ENCODE measurements at regions of chr11 and their contacts with region 1.

Region 1: GRCh38 chr11:129639300-129639699 is 176.3 kb upstream of the TMEM45B start:
- DNase-seq: peak; percentile 73
- H3K4me3 Mint-ChIP-seq: peak overlapping the region; percentile 42
- H3K27ac Mint-ChIP-seq: peak overlapping the region; percentile 87
- H3K4me1 Mint-ChIP-seq: peaks cover 70% of the 10 kb centered on the region
- H3K27me3 Mint-ChIP-seq: no peaks in the 10 kb centered on the region

Region 2: GRCh38 chr11:128052912-128053641 is 1586.2 kb before region 1 on chr11:
- intact Hi-C with region 1: loop called (anchors 10 kb)
- DNase-seq: peak; percentile 67
- H3K4me3 Mint-ChIP-seq: peak overlapping the region; percentile 63
- H3K27ac Mint-ChIP-seq: peak overlapping the region; percentile 81
- H3K4me1 Mint-ChIP-seq: peaks cover 48% of the 10 kb centered on the region
- H3K27me3 Mint-ChIP-seq: no peaks in the 10 kb centered on the region

Region 3: DNA sequence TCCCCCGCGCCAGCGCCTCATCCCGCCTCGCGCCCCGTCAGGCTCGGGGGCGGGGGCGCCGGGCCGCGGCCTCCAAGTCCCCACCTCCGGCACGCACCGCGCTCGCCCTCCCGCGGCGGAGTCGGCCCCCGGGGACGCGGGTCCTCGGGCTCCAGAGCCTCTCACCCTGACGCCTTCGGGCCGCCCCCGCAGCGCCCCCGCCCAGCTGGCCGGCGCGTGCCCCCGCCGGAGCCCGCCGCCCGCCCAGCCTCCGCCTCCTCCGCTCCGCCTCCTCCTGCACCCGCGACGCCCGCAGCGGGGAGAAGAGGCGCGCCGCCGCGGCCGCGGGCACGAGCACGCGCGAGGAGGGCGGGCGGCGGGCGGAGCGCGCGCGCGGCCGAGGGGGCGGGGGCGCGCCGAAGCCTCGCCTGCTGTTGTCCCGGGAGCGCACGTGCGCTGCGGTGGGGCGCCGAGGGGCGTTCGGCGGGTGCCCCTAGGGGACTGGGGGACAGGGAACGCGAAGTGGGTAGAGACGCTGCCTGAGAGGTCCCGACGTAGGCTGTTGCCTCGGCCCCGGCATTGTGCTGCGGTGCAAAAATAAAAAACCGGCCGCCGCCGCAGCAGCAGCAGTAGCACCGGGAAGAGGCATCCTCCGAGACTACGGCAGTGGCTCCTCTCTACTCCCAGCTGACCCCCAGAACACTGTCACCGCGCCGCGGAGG is 359.8 kb before region 1 on chr11:
- intact Hi-C with region 1: loop called (anchors 10 kb)
- DNase-seq: peak; percentile 95
- H3K4me3 Mint-ChIP-seq: peak overlapping the region; percentile 77
- H3K27ac Mint-ChIP-seq: peak overlapping the region; percentile 86
- H3K4me1 Mint-ChIP-seq: peaks cover 36% of the 10 kb centered on the region
- H3K27me3 Mint-ChIP-seq: peaks cover 33% of the 10 kb centered on the region

Region 4: DNA sequence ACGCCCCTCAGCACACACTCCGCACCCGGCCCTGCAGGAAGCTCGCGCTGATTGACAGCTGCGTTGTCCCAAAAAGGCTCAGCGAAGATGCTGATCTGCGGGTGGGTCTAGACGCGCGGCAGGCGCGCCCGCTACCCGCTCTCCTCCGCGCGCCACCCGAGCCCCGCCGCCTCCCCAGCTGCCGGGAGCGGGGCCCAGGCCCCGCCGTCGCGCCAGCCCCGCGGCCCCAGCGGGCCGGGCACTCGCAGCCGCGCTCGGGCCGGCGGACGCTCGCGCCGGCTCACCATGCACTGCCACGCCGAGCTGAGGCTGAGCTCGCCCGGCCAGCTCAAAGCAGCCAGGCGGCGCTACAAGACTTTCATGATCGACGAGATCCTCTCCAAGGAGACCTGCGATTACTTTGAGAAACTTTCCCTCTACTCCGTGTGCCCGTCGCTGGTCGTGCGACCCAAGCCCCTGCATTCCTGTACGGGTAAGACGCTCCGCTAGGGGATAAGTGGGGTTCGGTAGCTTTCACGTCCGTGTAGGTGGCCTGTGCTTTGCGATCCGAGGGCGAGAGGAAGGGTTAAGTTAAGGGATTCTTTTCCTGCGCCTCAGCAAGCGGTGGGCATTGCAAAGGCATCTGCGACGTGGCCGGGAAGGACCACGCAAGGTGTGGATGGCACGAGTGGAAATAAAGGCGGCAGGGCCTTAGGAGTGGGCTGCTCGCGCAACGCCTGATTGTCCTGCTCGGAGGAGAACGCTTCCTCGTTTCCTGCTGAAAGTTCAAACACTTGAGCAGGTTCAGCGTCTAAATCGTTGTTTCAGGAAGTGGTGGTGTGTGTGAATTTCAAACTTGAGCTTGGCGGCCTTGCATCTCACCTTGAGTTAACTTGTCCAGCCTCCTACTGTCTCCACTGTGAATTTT is 263.3 kb before region 1 on chr11 and contains the start of gene BARX2:
- intact Hi-C with region 1: loop called (anchors 5 kb)
- DNase-seq: peak; percentile 80
- H3K4me3 Mint-ChIP-seq: peak within 1 kb of the TSS; percentile 86
- H3K27ac Mint-ChIP-seq: peak within 1 kb of the TSS; percentile 52
- H3K4me1 Mint-ChIP-seq: peaks cover 26% of the 10 kb centered on the region
- H3K27me3 Mint-ChIP-seq: peaks cover 72% of the 10 kb centered on the region
- total RNA-seq, gene BARX2: 4.1 and 4.7 TPM in 2 replicates

Region 5: GRCh38 chr11:129418039-129418438 is 221.3 kb before region 1 on chr11:
- intact Hi-C with region 1: loop called (anchors 1 kb)
- DNase-seq: peak; percentile 57
- H3K4me3 Mint-ChIP-seq: no peak overlapping the region
- H3K27ac Mint-ChIP-seq: peak overlapping the region; percentile 35
- H3K4me1 Mint-ChIP-seq: peaks cover 23% of the 10 kb centered on the region
- H3K27me3 Mint-ChIP-seq: no peaks in the 10 kb centered on the region

Region 6: DNA sequence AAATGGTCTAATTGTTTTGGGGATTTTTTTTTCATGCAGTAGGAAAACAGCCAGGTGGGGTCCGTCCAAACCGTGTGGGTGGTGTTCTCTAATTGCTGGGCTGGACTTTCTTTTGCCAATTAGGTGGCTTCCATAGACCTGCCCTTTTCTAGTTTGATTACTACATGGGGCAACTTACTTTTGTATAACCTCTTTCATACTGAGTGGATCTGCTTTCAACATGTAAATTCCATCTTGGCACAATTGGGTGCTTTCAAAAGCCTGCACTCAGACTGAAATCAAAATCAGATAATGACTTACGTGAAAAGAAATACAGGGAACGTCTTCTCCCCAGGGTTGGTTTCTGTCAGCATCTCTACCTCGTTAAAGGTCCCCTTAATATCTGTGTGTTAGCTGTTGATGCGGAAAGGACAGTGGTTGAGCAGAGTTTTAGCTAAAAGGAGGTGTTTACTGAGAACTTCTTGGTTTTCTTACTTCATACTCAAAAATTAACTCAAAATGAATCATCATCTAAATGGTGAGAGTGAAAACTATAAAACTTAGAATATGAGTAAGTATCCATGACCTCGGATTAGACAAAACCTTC is 191.6 kb before region 1 on chr11:
- intact Hi-C with region 1: loop called (anchors 1 kb)
- DNase-seq: no peak
- H3K4me3 Mint-ChIP-seq: no peak overlapping the region
- H3K27ac Mint-ChIP-seq: peak overlapping the region; percentile 87
- H3K4me1 Mint-ChIP-seq: peaks cover 13% of the 10 kb centered on the region
- H3K27me3 Mint-ChIP-seq: peaks cover 2% of the 10 kb centered on the region

Region 7: GRCh38 chr11:129530154-129530895 is 109.0 kb before region 1 on chr11:
- intact Hi-C with region 1: no loop called
- DNase-seq: no peak
- H3K4me3 Mint-ChIP-seq: no peak overlapping the region
- H3K27ac Mint-ChIP-seq: no peak overlapping the region
- H3K4me1 Mint-ChIP-seq: no peaks in the 10 kb centered on the region
- H3K27me3 Mint-ChIP-seq: no peaks in the 10 kb centered on the region

Region 8: GRCh38 chr11:129593098-129593497 is 46.2 kb before region 1 on chr11:
- intact Hi-C with region 1: no loop called
- DNase-seq: no peak
- H3K4me3 Mint-ChIP-seq: no peak overlapping the region
- H3K27ac Mint-ChIP-seq: no peak overlapping the region
- H3K4me1 Mint-ChIP-seq: no peaks in the 10 kb centered on the region
- H3K27me3 Mint-ChIP-seq: no peaks in the 10 kb centered on the region

Region 9: DNA sequence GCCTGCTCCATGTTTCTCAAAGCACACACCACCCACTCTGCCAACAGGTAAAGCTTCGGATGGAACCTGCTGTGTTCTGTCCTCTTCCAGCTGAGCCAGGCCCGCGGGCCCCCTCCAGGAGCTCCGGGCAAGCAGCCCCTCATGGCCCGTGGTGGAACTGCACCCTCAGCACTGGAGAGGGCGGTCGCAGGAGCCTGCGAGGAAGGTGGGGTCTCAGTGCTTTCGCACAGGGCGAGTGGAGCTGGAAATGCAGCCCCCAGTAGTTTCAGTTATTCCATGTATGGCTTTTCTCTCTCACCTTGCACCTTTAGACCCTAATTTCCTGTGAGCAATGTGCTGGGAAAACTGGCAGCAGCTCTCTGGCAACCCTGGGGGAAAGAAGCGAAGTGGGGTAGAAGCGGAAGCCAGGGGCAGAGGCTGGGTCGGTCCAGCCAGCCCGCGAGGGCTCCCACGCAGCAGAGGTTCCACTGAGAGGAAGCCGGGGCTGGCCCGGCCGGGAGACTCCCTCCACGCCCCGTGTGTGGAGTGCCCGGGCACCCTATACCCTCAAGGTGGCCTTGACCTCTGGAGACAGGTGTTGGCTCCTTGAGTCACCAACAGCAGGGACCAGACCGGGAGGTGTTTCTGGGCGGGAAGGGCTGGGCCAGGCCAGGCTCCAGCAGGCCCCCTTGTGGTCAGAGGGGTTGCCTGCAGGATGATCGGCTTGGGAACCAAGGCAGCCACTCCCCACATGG is 56.4 kb after region 1 on chr11:
- intact Hi-C with region 1: loop called (anchors 2 kb)
- DNase-seq: peak; percentile 88
- H3K4me3 Mint-ChIP-seq: peak overlapping the region; percentile 77
- H3K27ac Mint-ChIP-seq: peak overlapping the region; percentile 41
- H3K4me1 Mint-ChIP-seq: peaks cover 6% of the 10 kb centered on the region
- H3K27me3 Mint-ChIP-seq: peaks cover 3% of the 10 kb centered on the region